GM10248 (cell line): ENCODE measurements at regions of chr6 and their contacts with region 1.

Region 1: DNA sequence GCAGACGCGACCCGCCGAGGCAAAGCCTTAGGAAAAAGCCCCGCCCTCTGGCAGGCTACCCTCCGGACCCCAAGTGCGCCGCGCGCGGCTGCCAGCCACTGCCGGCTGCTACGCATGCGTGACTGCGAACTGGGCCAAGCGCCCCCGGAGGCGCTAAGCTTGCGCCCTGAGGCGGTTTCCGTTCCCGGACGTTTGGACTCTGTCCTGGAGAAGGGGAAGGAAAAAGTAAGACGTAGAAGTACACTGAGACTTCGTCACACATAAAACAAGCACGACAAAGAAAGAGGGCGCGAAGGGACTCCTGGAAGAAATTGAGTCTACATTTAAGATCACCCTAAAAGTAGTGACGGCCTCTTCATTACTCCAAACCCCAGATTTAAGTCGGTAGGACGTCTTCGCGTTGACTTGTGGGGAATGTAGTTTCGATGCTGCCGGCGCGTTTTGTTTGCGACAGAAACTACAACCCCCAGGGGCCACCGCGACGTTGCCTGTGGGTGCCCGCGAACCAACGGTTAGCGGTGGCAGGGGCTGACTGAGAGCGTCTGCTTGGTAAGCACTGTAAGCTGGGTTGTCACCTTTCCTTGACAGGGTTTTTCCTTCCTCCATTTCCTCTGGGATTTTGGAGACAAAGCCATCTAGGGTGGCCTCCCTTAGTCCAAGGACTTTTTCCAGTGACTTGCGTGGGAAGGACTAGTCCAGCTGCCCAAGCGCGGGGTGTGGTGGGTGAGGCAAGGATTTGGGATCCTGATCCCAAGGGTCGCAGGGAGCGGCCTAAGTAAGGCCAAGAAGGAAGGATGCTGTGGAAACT is at the start of gene CEP57L1:
- DNase-seq: peak; percentile 85
- CTCF ChIP-seq: peak; percentile 20

Region 2: DNA sequence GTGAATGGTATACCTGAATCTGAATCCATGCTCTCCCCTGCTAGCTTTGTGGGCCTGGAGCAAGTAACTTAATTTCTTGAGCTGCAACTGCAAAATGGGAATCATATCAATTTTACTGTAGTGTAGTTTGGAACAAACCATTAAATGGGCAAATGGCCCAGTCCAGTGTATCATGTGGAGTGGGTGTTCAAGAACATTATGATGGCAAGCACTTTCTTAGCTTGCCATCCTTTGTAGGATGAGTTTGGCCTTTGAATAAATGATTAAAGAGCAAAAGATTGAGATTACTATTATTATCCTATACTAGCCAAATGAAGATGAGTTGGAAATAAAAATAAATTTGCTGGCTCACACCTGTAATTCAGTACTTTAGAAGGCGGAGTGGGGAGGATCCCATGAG is 121.0 kb before region 1 on chr6:
- CTCF ChIA-PET with region 1: no interaction called
- POLR2A ChIA-PET with region 1: no interaction called
- DNase-seq: no peak
- CTCF ChIP-seq: no peak

Region 3: DNA sequence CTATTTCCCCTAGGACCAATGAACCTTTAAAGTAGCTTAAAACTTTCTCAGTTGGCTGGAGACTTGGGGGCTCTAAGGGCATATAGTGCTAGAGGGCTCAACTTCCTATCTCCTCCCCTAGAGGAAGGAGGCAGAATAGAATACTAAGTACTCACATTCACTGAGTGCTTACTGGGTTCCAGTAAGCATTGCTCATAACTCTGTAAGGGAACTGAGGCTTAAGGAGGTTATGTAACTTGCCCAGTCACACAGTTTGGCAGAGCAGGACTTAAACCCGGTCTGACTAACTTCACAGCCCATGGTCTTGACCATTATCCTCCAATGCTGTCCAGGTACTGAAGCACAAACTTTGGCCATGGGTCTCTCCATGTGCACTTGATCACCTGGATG is 13.0 kb before region 1 on chr6:
- CTCF ChIA-PET with region 1: interaction called, 10 read pairs
- POLR2A ChIA-PET with region 1: no interaction called
- DNase-seq: no peak
- CTCF ChIP-seq: no peak

Region 4: GRCh38 chr6:109269953-109270517 is 174.8 kb after region 1 on chr6:
- CTCF ChIA-PET with region 1: no interaction called
- POLR2A ChIA-PET with region 1: no interaction called
- DNase-seq: no peak
- CTCF ChIP-seq: no peak